ENCODE measurements at regions of chr2 and their contacts with region 1.

Region 1: GRCh38 chr2:126317790-126318431 is 338.0 kb upstream of the GYPC start:
- DNase-seq: no peak
- ATAC-seq: no peak
- H3K4me3 ChIP-seq: no peak overlapping the region
- H3K27ac ChIP-seq: no peak overlapping the region
- H3K4me1 ChIP-seq: no peaks in the 10 kb centered on the region
- H3K27me3 ChIP-seq: no peaks in the 10 kb centered on the region
- CTCF ChIP-seq: no peak
- EP300 ChIP-seq: no peak
- POLR2A ChIP-seq: no peak
- RAD21 ChIP-seq: no peak

Region 2: GRCh38 chr2:124953921-124954320 is 1364.0 kb before region 1 on chr2:
- CTCF ChIA-PET with region 1: no interaction called
- POLR2A ChIA-PET with region 1: no interaction called
- in situ Hi-C with region 1: no loop called
- intact Hi-C with region 1: loop called (anchors 5 kb)
- DNase-seq: no peak
- ATAC-seq: no peak
- H3K4me3 ChIP-seq: no peak overlapping the region
- H3K27ac ChIP-seq: no peak overlapping the region
- H3K4me1 ChIP-seq: no peaks in the 10 kb centered on the region
- H3K27me3 ChIP-seq: no peaks in the 10 kb centered on the region
- CTCF ChIP-seq: no peak
- EP300 ChIP-seq: no peak
- POLR2A ChIP-seq: no peak
- RAD21 ChIP-seq: no peak

Region 3: GRCh38 chr2:126117895-126118294 is 200.0 kb before region 1 on chr2:
- CTCF ChIA-PET with region 1: no interaction called
- POLR2A ChIA-PET with region 1: no interaction called
- in situ Hi-C with region 1: no loop called
- intact Hi-C with region 1: no loop called
- DNase-seq: no peak
- ATAC-seq: no peak
- H3K4me3 ChIP-seq: no peak overlapping the region
- H3K27ac ChIP-seq: no peak overlapping the region
- H3K4me1 ChIP-seq: no peaks in the 10 kb centered on the region
- H3K27me3 ChIP-seq: no peaks in the 10 kb centered on the region; a peak in 1 of 5 replicates
- CTCF ChIP-seq: no peak
- EP300 ChIP-seq: no peak
- POLR2A ChIP-seq: no peak
- RAD21 ChIP-seq: no peak

Region 4: DNA sequence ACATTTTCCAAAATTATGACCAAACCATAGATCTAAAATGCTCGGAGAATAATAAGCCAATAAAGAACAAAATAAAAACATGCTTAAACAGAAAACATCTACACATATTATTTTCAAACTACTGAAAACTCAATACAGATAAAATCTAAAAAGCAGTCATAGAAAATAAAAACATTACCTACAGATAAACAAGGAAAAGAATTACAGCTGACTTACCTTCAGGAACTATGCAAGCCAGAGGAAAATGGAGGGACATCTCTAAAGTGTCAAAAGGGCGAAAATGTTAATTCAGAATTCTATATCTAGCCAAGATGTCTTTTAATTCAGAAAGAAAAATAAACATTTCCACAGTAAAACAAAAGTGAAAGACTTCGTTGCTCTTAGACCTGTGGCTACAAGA is 225.2 kb after region 1 on chr2:
- CTCF ChIA-PET with region 1: no interaction called
- POLR2A ChIA-PET with region 1: no interaction called
- in situ Hi-C with region 1: no loop called
- intact Hi-C with region 1: no loop called
- DNase-seq: no peak
- ATAC-seq: no peak
- H3K4me3 ChIP-seq: no peak overlapping the region
- H3K27ac ChIP-seq: no peak overlapping the region
- H3K4me1 ChIP-seq: no peaks in the 10 kb centered on the region
- H3K27me3 ChIP-seq: no peaks in the 10 kb centered on the region; a peak in 1 of 5 replicates
- CTCF ChIP-seq: no peak
- EP300 ChIP-seq: no peak
- POLR2A ChIP-seq: no peak
- RAD21 ChIP-seq: no peak

Measured in HepG2 (cell line).